ENCODE measurements at regions of chr7 and their contacts with region 1.

Region 1: GRCh38 chr7:74026903-74027551 is 946 bp upstream of the ELN start:
- ATAC-seq: peak; percentile 50 to 84 (median 66)
- H3K4me3 ChIP-seq: no peak overlapping the region
- H3K27ac ChIP-seq: peak overlapping the region in 1 of 2 donors; percentile 49
- H3K4me1 ChIP-seq: peaks cover 40 to 50% of the 10 kb centered on the region in 2 donors

Region 2: GRCh38 chr7:73468097-73468496 is 558.9 kb before region 1 on chr7:
- in situ Hi-C with region 1: no loop called
- ATAC-seq: peak in 1 of 8 experiments; percentile 28
- H3K4me3 ChIP-seq: no peak overlapping the region
- H3K27ac ChIP-seq: no peak overlapping the region
- H3K4me1 ChIP-seq: no peaks in the 10 kb centered on the region

Region 3: DNA sequence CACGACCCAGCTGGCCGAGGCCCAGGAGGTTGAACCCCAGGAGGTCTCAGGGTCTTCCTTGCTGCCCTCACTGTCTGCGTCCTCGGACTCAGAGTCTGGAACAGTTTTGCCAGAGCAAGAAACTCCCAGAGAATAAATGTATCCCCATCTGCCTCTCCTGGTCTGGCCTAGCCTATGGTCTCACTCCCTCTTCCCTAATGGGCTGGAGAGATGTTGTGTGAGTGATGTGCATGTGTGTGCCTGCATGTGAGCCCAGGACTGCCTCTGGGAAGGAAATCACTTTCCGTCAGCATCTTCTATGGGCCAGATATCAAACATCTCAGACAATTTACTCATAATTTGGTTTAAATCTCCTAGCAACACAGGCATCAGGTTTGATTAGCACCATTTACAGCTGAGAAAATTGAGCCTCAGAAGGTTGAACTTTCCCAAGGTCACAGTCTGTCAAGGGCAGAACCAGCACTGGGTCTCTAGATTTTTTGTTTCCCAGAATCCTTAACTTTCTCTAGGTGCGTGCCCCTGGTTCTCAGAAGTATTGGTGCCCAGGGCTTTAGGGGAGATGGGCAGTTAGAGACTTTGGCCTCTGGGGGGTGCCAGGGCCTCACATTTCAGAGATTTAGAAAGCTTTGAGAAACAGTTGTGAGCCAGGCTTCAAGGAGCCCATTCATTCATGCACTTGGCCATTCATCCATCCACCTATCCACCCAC is 161.1 kb before region 1 on chr7:
- in situ Hi-C with region 1: loop called in 1 of 9 experiments (anchors 10 kb)
- ATAC-seq: peak in 4 of 8 experiments; percentile 29 to 89 (median 82)
- H3K4me3 ChIP-seq: no peak overlapping the region
- H3K27ac ChIP-seq: no peak overlapping the region
- H3K4me1 ChIP-seq: peaks cover 16 to 20% of the 10 kb centered on the region in 2 donors

Region 4: GRCh38 chr7:74173866-74174605 is 147.0 kb after region 1 on chr7 and contains the start of gene EIF4H:
- in situ Hi-C with region 1: no loop called
- ATAC-seq: peak; percentile 90 to 97 (median 96)
- H3K4me3 ChIP-seq: peak within 1 kb of the TSS; percentile 75 to 91 (median 88)
- H3K27ac ChIP-seq: peak within 1 kb of the TSS; percentile 94 to 99
- H3K4me1 ChIP-seq: peaks cover 24 to 37% of the 10 kb centered on the region in 2 donors
- total RNA-seq, gene EIF4H: 203 to 351 (median 241) TPM

Measured in motor neuron (in vitro differentiated cells).